Kidney (tissue), 22 donors: ENCODE measurements at regions of chr1 and their contacts with region 1.

Region 1: GRCh38 chr1:184805667-184806295 is 51.1 kb upstream of the EDEM3 start:
- DNase-seq: peak; percentile 90 to 95 (median 91)
- H3K4me3 ChIP-seq: no peak overlapping the region
- H3K27ac ChIP-seq: no peak overlapping the region
- H3K4me1 ChIP-seq: no peaks in the 10 kb centered on the region
- H3K27me3 ChIP-seq: no peaks in the 10 kb centered on the region
- CTCF ChIP-seq: peak; percentile 95

Region 2: GRCh38 chr1:184708084-184708676 is 97.6 kb before region 1 on chr1:
- intact Hi-C with region 1: no loop called
- DNase-seq: no peak
- H3K4me3 ChIP-seq: no peak overlapping the region
- H3K27ac ChIP-seq: no peak overlapping the region
- H3K4me1 ChIP-seq: no peaks in the 10 kb centered on the region
- H3K27me3 ChIP-seq: no peaks in the 10 kb centered on the region
- CTCF ChIP-seq: no peak

Region 3: DNA sequence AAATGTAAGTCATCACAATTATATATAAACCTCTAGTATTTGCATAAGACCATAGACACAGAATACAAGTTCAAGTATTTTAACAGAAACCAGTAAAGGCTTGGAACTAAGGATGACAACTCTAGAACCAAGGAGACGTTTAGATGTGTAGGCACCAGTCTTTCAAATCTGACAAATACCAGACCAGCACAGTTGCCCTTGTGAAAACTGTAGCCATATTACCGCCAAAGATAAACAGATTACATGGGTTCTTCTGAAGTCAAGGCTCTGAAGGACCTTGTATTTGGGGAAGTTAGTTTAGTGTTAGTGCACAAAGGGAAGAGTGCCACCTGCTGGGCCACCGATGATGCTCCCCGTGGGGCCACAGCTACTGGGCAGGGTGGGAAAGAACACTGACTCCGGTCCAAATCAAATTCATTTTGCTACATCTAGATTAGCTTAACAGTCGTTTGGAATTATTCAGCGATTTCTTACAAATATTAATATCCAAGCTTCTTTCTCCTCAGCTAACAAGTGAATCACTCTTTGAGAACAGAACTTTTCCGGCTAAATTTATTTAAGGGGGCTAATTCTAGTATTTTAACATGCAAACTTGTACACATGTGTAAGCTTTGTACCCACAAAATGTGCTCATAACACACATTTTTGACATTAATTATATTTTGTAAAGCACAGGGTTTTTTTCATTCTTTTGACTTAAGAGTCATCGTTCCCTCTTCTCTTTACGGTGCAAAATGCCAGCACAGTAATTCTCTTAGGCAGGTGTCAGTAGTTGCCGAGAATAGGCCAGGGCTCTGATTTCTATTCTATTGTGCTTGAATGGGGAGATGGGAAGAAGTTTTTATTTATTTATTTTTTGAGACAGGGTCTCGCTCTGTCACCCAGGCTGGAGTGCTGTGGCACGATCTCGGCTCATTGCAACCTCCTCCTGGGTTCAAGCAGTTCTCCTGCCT is 176.5 kb after region 1 on chr1:
- intact Hi-C with region 1: loop called (anchors 5 kb)
- DNase-seq: peak; percentile 39 to 77 (median 51)
- H3K4me3 ChIP-seq: no peak overlapping the region
- H3K27ac ChIP-seq: no peak overlapping the region
- H3K4me1 ChIP-seq: no peaks in the 10 kb centered on the region
- H3K27me3 ChIP-seq: no peaks in the 10 kb centered on the region
- CTCF ChIP-seq: peak; percentile 73

Region 4: GRCh38 chr1:185170291-185170848 is 364.6 kb after region 1 on chr1:
- intact Hi-C with region 1: loop called (anchors 10 kb)
- DNase-seq: peak in 4 of 5 donors; percentile 57 to 90 (median 74)
- H3K4me3 ChIP-seq: no peak overlapping the region
- H3K27ac ChIP-seq: no peak overlapping the region
- H3K4me1 ChIP-seq: no peaks in the 10 kb centered on the region
- H3K27me3 ChIP-seq: no peaks in the 10 kb centered on the region
- CTCF ChIP-seq: peak; percentile 49